Mammary epithelial cell (primary cell): ENCODE measurements at regions of chr2 and their contacts with region 1.

Region 1: DNA sequence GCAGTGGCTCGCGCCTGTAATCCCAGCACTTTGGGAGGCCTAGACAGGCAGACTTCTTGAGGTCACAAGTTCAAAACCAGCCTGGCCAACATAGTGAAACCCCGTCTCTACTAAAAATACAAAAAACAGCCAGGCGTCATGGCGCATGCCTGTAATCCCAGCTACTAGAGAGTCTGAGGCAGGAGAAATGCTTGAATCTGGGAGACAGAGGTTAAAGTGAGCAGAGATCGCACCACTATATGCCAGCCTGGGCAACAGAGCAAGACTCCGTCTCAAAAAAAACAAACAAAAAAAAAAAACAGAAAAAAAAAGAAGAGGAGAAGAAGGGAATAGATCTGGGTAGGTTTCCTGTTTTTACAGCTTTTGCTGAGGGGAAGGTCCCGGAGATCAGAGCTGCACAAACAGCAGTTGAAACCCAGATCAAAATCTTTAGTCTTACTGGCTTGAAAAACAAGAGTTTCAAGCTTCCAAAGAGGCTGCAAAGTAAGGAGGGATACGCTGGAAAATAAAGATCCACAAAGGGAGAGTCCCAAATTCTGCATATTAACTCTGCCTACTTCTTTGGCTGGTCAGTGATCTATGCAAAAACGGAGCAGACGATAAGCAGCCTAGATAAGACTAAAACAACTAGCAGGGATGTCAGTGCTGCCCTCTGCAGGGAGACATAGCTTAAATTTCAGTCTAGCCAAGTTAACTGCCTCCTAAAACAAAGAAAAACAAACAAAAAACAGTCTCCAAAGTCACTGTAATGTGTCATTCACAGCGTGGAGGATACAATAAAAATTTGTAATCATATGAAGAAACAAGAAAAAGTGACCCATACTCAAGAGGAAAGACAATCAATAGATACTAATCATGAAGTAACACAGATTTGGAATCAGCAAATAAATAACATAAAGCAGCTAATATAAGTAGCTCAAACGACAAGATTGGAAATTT is 74.1 kb downstream of the TLK1 start:
- DNase-seq: peak; percentile 6
- H3K4me3 ChIP-seq: no peak overlapping the region
- H3K27ac ChIP-seq: no peak overlapping the region
- H3K4me1 ChIP-seq: no peaks in the 10 kb centered on the region
- H3K27me3 ChIP-seq: no peaks in the 10 kb centered on the region
- CTCF ChIP-seq: peak; percentile 63 to 66

Region 2: GRCh38 chr2:171008550-171009205 is 77.9 kb before region 1 on chr2:
- CTCF ChIA-PET with region 1: no interaction called
- dilution Hi-C with region 1: loop called (anchors 5 kb)
- in situ Hi-C with region 1: no loop called
- intact Hi-C with region 1: no loop called
- DNase-seq: no peak
- H3K4me3 ChIP-seq: no peak overlapping the region
- H3K27ac ChIP-seq: no peak overlapping the region
- H3K4me1 ChIP-seq: no peaks in the 10 kb centered on the region
- H3K27me3 ChIP-seq: no peaks in the 10 kb centered on the region
- CTCF ChIP-seq: no peak

Region 3: DNA sequence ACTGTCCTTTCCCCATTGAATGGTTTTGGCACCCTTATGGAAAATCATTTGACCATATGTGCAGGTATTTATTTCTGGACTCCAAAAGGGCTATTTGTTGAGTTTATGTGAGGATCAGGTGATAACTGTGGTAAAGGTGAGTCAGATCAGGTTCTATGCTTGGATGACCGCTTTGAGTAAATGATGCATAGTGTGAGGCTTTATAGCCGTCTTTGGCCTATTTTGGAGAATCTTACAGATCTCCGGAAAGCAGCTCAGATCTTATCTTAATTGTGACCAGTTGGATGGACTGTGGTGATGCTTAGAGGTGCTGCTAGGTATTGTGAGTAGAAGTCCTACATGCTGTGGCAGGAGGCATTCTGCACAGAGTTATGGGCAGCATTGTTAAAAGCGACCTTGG is 220.9 kb after region 1 on chr2:
- CTCF ChIA-PET with region 1: no interaction called
- dilution Hi-C with region 1: loop called (anchors 5 kb)
- in situ Hi-C with region 1: no loop called
- intact Hi-C with region 1: no loop called
- DNase-seq: no peak
- H3K4me3 ChIP-seq: no peak overlapping the region
- H3K27ac ChIP-seq: no peak overlapping the region
- H3K4me1 ChIP-seq: no peaks in the 10 kb centered on the region
- H3K27me3 ChIP-seq: no peaks in the 10 kb centered on the region
- CTCF ChIP-seq: no peak